Calu3 (cell line): ENCODE measurements at regions of chr18 and their contacts with region 1.

Region 1: DNA sequence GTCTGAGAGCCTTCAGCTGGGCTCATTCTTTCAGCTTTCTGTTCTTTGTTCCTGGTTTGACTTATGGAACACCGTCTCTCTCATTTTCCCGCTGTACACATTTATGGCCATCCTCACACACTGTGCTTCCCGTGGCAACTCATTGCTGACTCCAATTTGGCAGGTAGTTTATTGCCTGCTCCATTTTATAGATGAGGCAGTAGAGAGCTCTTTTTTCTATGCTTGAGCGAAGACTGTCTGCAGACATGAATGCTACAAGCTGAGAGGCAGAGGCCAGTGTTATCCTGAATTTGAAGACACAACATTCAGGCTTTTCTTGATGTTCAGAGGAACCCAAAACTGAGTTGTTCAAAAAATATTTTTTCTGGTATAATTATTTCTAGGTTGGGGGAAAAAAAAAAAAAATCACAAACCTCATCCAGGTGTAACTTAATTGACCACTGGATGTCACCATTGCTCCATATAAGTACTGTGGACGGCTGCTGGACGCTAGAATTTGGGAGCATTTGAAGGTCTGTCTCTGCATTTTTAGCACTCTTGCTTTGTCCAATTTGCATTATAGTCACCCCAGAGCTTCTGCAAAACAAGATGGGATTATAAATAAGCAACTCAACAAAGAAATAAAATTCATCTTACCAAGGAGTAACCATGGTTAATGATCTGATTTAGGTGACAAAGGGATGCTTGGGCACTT is 83.5 kb downstream of the HRH4 start:
- DNase-seq: peak; percentile 35
- H3K4me3 Mint-ChIP-seq: no peak overlapping the region
- H3K27ac Mint-ChIP-seq: no peak overlapping the region
- H3K4me1 Mint-ChIP-seq: no peaks in the 10 kb centered on the region
- H3K27me3 Mint-ChIP-seq: peaks cover 52% of the 10 kb centered on the region
- CTCF ChIP-seq: peak; percentile 42

Region 2: DNA sequence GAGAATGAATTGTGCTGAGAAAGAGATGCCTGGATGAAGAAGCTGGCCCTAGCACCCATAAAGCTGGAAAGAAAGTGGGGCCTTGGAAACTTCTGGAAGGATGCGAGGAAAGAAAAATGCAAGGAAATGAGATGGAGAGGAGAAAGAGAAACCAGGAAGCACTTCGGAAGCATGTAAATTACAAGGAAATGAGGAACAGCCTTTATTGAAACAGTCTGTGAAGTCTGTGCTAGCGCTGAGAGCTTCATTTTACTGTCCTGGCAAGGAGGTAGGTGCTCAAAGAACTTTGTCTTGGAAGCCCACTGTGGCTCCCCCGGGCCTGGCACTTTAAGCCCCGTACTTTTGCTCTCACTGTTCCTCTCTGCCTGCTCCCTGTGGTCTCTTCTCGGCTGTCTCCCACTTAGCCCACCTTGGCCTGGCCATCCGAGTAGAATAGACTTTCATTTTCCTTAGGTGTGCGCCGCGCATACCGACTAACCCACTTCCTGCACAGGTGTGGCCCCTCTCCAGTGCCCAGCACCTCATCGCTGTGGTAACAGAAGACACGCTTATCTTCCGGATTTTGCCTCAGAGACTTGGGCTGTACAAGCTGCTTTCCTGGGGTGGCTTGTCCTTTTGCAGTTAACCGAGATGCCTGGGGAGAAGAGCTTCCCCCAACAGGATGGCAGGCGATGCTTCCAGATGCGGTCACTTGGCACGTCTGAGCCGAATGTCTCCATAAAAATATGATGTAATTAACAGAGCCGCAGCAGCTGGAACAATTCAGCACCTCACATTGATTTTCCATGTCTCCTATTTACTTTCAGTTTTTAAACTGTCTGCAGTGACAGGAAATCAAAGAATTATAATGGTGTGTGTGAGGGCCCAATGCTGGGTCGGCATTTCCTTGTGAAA is 116.1 kb after region 1 on chr18:
- CTCF ChIA-PET with region 1: no interaction called
- intact Hi-C with region 1: loop called (anchors 5 kb)
- DNase-seq: peak; percentile 24
- H3K4me3 Mint-ChIP-seq: peak overlapping the region; percentile 69
- H3K27ac Mint-ChIP-seq: peak overlapping the region; percentile 12
- H3K4me1 Mint-ChIP-seq: peaks cover 14% of the 10 kb centered on the region
- H3K27me3 Mint-ChIP-seq: peaks cover 47% of the 10 kb centered on the region
- CTCF ChIP-seq: no peak